Gastrocnemius medialis (tissue), 4 donors: ENCODE measurements at regions of chr2 and their contacts with region 1.

Region 1: GRCh38 chr2:37832590-37833197 is 92.4 kb upstream of the RMDN2 start:
- DNase-seq: peak; percentile 74 to 83
- ATAC-seq: peak; percentile 90 to 91
- H3K4me3 ChIP-seq: no peak overlapping the region
- H3K27ac ChIP-seq: no peak overlapping the region
- H3K4me1 ChIP-seq: peaks cover 10 to 15% of the 10 kb centered on the region in 2 donors
- H3K27me3 ChIP-seq: no peaks in the 10 kb centered on the region
- CTCF ChIP-seq: peak; percentile 80 to 88 (median 86)
- POLR2A ChIP-seq: no peak

Region 2: GRCh38 chr2:37389989-37390765 is 442.5 kb before region 1 on chr2:
- in situ Hi-C with region 1: loop called in 1 of 4 experiments (anchors 5 kb)
- intact Hi-C with region 1: no loop called
- DNase-seq: no peak
- ATAC-seq: peak; percentile 62 to 76
- H3K4me3 ChIP-seq: no peak overlapping the region
- H3K27ac ChIP-seq: peak overlapping the region; percentile 8 to 46 (median 38)
- H3K4me1 ChIP-seq: peaks cover 7 to 9% of the 10 kb centered on the region in 2 donors
- H3K27me3 ChIP-seq: no peaks in the 10 kb centered on the region
- CTCF ChIP-seq: no peak
- POLR2A ChIP-seq: no peak

Region 3: GRCh38 chr2:37549598-37549997 is 283.1 kb before region 1 on chr2:
- in situ Hi-C with region 1: loop called in 1 of 4 experiments (anchors 25 kb)
- intact Hi-C with region 1: loop called (anchors 5 kb)
- DNase-seq: no peak
- ATAC-seq: no peak
- H3K4me3 ChIP-seq: no peak overlapping the region
- H3K27ac ChIP-seq: no peak overlapping the region
- H3K4me1 ChIP-seq: no peaks in the 10 kb centered on the region
- H3K27me3 ChIP-seq: no peaks in the 10 kb centered on the region
- CTCF ChIP-seq: no peak
- POLR2A ChIP-seq: no peak

Region 4: GRCh38 chr2:37585982-37586621 is 246.6 kb before region 1 on chr2:
- in situ Hi-C with region 1: no loop called
- intact Hi-C with region 1: loop called (anchors 5 kb)
- DNase-seq: peak; percentile 25 to 62
- ATAC-seq: no peak
- H3K4me3 ChIP-seq: no peak overlapping the region
- H3K27ac ChIP-seq: peak overlapping the region; percentile 76 to 87 (median 85)
- H3K4me1 ChIP-seq: peaks cover 64 to 65% of the 10 kb centered on the region in 2 donors
- H3K27me3 ChIP-seq: no peaks in the 10 kb centered on the region
- CTCF ChIP-seq: no peak
- POLR2A ChIP-seq: no peak

Region 5: DNA sequence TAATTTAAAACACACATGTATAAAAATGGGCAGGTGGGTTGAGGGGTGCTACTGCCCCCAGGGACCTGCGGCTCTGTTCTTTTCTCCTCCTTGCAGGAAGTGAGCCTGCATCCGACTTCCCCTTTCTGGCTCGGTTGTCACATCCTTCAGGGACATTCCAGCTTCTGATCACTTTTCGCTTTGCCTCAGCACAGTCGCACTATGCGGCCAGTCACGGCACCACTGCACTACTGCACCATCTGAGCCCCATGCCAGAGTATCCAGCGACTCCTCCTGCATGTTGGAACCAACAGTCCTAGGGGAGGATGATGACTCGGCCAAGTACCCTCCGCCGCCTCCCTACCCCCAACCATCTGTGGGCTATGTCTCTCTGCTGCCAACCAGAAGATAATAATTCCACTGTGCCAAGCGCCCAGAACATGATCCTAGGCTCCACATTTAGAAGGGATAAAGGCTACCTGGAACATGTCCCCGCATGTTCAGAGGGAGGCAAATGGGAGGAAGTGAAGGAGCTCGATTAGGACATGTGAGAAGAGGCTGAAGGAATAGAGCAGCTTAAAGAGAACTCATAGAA is 178.8 kb before region 1 on chr2:
- in situ Hi-C with region 1: no loop called
- intact Hi-C with region 1: loop called (anchors 5 kb)
- DNase-seq: peak; percentile 80 to 95
- ATAC-seq: peak; percentile 83 to 85
- H3K4me3 ChIP-seq: peak overlapping the region; percentile 16 to 46 (median 27)
- H3K27ac ChIP-seq: peak overlapping the region; percentile 85 to 88 (median 87)
- H3K4me1 ChIP-seq: peaks cover 93 to 94% of the 10 kb centered on the region in 2 donors
- H3K27me3 ChIP-seq: no peaks in the 10 kb centered on the region
- CTCF ChIP-seq: no peak
- POLR2A ChIP-seq: peak; percentile 4 to 46

Region 6: GRCh38 chr2:37672104-37672869 is 160.4 kb before region 1 on chr2:
- in situ Hi-C with region 1: no loop called
- intact Hi-C with region 1: loop called (anchors 2 kb)
- DNase-seq: peak; percentile 73 to 92
- ATAC-seq: peak; percentile 75 to 82
- H3K4me3 ChIP-seq: peak overlapping the region; percentile 81 to 99 (median 95)
- H3K27ac ChIP-seq: peak overlapping the region; percentile 98 to 100 (median 100)
- H3K4me1 ChIP-seq: peaks cover 29 to 42% of the 10 kb centered on the region in 2 donors
- H3K27me3 ChIP-seq: no peaks in the 10 kb centered on the region
- CTCF ChIP-seq: peak in 4 of 5 experiments; percentile 6 to 26 (median 16)
- POLR2A ChIP-seq: peak; percentile 79 to 80

Region 7: GRCh38 chr2:37877457-37878315 is 45.0 kb after region 1 on chr2:
- in situ Hi-C with region 1: no loop called
- intact Hi-C with region 1: loop called (anchors 5 kb)
- DNase-seq: no peak
- ATAC-seq: peak; percentile 77 to 95
- H3K4me3 ChIP-seq: no peak overlapping the region
- H3K27ac ChIP-seq: no peak overlapping the region
- H3K4me1 ChIP-seq: peaks cover 0 to 6% of the 10 kb centered on the region in 2 donors
- H3K27me3 ChIP-seq: no peaks in the 10 kb centered on the region
- CTCF ChIP-seq: peak; percentile 67 to 83 (median 71)
- POLR2A ChIP-seq: no peak

Region 8: DNA sequence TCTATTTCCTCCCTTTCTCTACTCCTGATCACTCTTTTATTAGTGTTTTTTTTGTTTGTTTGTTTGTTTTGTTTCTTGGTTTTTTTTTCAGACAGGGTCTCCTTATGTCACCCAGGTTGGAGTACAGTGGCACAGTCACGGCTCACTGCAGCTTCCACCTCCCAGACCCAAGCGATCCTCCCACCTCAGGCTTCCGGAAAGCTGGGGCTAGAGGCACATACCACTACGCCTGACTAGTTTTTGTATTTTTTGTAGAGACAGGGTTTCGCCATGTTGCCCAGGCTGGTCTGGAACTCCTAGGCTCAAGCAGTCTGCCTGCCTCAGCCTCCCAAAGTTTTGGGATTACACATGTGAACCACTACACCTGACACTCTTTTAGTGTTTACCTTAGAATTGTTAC is 422.1 kb after region 1 on chr2:
- in situ Hi-C with region 1: no loop called
- intact Hi-C with region 1: no loop called
- DNase-seq: no peak
- ATAC-seq: no peak
- H3K4me3 ChIP-seq: no peak overlapping the region
- H3K27ac ChIP-seq: no peak overlapping the region
- H3K4me1 ChIP-seq: no peaks in the 10 kb centered on the region
- H3K27me3 ChIP-seq: no peaks in the 10 kb centered on the region
- CTCF ChIP-seq: no peak
- POLR2A ChIP-seq: no peak

Region 9: DNA sequence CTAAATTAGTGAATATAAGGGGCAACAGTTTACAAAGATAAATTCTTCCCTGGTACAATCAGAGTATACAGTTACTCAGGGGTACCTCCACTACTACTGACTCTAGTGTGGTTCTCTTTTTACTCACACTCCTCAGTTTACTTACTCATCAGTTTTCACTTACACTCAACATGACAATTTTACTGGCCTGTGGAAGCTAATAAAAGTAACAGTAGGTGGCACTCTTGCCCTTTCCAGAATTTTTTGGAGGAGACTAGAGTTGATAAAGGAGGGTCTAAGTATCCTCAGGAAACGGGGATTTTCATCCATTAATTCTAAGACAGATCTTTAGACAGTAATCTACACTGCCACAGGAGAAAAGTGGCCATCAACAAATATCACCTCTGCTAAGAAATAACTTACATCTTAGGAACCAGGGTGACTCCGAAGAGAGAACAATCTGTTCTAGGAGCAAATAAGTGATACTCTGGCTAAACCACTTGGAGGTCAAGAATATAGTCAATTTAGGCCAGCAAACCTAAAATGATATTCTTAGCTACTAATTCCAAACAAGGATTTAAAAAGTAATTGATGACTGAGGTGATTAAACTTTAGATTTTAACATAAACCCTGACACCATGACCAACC is 483.1 kb after region 1 on chr2:
- in situ Hi-C with region 1: no loop called
- intact Hi-C with region 1: no loop called
- DNase-seq: no peak
- ATAC-seq: peak; percentile 72 to 79
- H3K4me3 ChIP-seq: no peak overlapping the region
- H3K27ac ChIP-seq: peak overlapping the region in 1 of 4 donors; percentile 6
- H3K4me1 ChIP-seq: peaks cover 0 to 3% of the 10 kb centered on the region in 2 donors
- H3K27me3 ChIP-seq: no peaks in the 10 kb centered on the region
- CTCF ChIP-seq: peak; percentile 42 to 79 (median 70)
- POLR2A ChIP-seq: no peak